Brain microvascular endothelial cell (primary cell): ENCODE measurements at regions of chr21 and their contacts with region 1.

Region 1: GRCh38 chr21:37758982-37759381 is 157.3 kb downstream of the KCNJ6 start:
- DNase-seq: peak; percentile 52
- H3K4me3 ChIP-seq: no peak overlapping the region
- H3K27ac ChIP-seq: no peak overlapping the region
- H3K27me3 ChIP-seq: peaks cover 9% of the 10 kb centered on the region
- CTCF ChIP-seq: peak; percentile 91

Region 2: GRCh38 chr21:37921091-37921490 is 162.1 kb after region 1 on chr21:
- in situ Hi-C with region 1: no loop called
- DNase-seq: no peak
- H3K4me3 ChIP-seq: no peak overlapping the region
- H3K27ac ChIP-seq: no peak overlapping the region
- H3K27me3 ChIP-seq: peaks cover 3% of the 10 kb centered on the region
- CTCF ChIP-seq: no peak

Region 3: DNA sequence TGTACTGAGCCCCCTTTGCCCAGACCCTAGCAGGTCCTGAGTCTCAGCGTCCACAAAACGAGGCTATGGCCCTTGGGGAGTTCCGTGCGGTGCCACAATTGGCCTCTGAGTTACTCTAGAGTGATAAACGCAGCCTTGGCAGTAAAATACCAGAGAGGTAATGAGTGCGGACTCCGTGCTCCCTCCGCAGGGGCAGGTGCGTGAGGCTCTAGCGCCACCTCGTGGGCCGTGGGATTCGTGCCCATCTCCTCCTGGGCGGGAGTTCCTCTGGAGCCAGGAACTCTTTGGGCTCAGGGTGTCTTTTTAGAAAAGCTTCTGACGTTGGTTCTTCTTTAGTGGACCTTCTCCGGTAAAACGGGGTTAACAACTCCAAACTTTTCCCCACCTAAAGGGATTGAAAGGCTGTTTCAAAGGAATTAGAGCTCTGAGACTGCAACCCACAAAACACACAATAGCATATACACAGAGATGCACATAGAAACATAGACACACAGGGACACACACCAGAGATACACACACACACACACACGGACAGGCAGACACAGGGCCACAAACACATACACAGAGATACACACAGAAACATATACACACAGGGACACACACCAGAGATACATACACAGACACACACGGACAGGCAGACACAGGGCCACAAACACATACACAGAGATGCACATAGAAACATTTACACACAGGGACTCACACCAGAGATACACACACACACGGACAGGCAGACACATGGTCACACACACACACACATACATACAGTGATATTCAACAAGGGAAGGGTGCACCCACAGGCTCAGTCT is 597.2 kb after region 1 on chr21:
- in situ Hi-C with region 1: loop called (anchors 25 kb)
- DNase-seq: peak; percentile 65
- H3K4me3 ChIP-seq: no peak overlapping the region
- H3K27ac ChIP-seq: no peak overlapping the region
- H3K27me3 ChIP-seq: no peaks in the 10 kb centered on the region
- CTCF ChIP-seq: peak; percentile 99